Calu3 (cell line): ENCODE measurements at regions of chr4 and their contacts with region 1.

Region 1: GRCh38 chr4:25439918-25440477 is 62.9 kb downstream of the ANAPC4 start:
- DNase-seq: peak; percentile 70
- H3K4me3 Mint-ChIP-seq: no peak overlapping the region
- H3K27ac Mint-ChIP-seq: no peak overlapping the region
- H3K4me1 Mint-ChIP-seq: peaks cover 27% of the 10 kb centered on the region
- H3K27me3 Mint-ChIP-seq: no peaks in the 10 kb centered on the region
- CTCF ChIP-seq: peak; percentile 75

Region 2: GRCh38 chr4:25509646-25510045 is 69.6 kb after region 1 on chr4:
- CTCF ChIA-PET with region 1: no interaction called
- intact Hi-C with region 1: loop called (anchors 5 kb)
- DNase-seq: no peak
- H3K4me3 Mint-ChIP-seq: no peak overlapping the region
- H3K27ac Mint-ChIP-seq: no peak overlapping the region
- H3K4me1 Mint-ChIP-seq: no peaks in the 10 kb centered on the region
- H3K27me3 Mint-ChIP-seq: no peaks in the 10 kb centered on the region
- CTCF ChIP-seq: no peak

Region 3: GRCh38 chr4:25654971-25655963 is 215.3 kb after region 1 on chr4 and contains the start of gene SLC34A2:
- CTCF ChIA-PET with region 1: interaction called, 3 read pairs
- intact Hi-C with region 1: loop called (anchors 5 kb)
- DNase-seq: peak; percentile 75
- H3K4me3 Mint-ChIP-seq: peak within 1 kb of the TSS; percentile 75
- H3K27ac Mint-ChIP-seq: peak within 1 kb of the TSS; percentile 20
- H3K4me1 Mint-ChIP-seq: peaks cover 41% of the 10 kb centered on the region
- H3K27me3 Mint-ChIP-seq: no peaks in the 10 kb centered on the region
- CTCF ChIP-seq: no peak
- total RNA-seq, gene SLC34A2: 12.8 and 23.0 TPM in 2 replicates

Region 4: DNA sequence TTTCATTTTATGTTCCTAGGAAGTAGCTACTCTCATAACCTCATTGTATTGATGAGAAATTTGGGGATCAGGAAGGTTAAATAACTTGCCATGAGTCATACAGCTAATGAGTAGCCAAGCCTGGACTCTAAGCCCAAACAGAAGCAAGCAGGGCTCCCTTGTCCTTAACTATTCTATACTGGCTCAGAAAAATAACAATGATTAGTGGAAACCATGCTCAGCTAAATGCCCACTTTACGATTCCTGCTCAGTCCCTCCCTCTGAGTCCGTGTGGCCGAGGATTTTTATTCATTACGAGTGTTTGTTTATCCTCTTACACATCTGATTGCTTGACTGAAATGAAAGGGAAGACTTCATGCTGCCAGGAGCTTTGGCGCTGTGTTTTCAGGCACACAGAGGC is 316.5 kb after region 1 on chr4:
- CTCF ChIA-PET with region 1: interaction called, 9 read pairs
- intact Hi-C with region 1: loop called (anchors 2 kb)
- DNase-seq: peak; percentile 23
- H3K4me3 Mint-ChIP-seq: no peak overlapping the region
- H3K27ac Mint-ChIP-seq: peak overlapping the region; percentile 13
- H3K4me1 Mint-ChIP-seq: peaks cover 24% of the 10 kb centered on the region
- H3K27me3 Mint-ChIP-seq: no peaks in the 10 kb centered on the region
- CTCF ChIP-seq: no peak

Region 5: GRCh38 chr4:25767877-25768725 is 328.1 kb after region 1 on chr4:
- CTCF ChIA-PET with region 1: interaction called, 21 read pairs
- intact Hi-C with region 1: loop called (anchors 1 kb)
- DNase-seq: peak; percentile 27
- H3K4me3 Mint-ChIP-seq: no peak overlapping the region
- H3K27ac Mint-ChIP-seq: no peak overlapping the region
- H3K4me1 Mint-ChIP-seq: peaks cover 8% of the 10 kb centered on the region
- H3K27me3 Mint-ChIP-seq: no peaks in the 10 kb centered on the region
- CTCF ChIP-seq: peak; percentile 22